ENCODE measurements at regions of chr1 and their contacts with region 1.

Region 1: DNA sequence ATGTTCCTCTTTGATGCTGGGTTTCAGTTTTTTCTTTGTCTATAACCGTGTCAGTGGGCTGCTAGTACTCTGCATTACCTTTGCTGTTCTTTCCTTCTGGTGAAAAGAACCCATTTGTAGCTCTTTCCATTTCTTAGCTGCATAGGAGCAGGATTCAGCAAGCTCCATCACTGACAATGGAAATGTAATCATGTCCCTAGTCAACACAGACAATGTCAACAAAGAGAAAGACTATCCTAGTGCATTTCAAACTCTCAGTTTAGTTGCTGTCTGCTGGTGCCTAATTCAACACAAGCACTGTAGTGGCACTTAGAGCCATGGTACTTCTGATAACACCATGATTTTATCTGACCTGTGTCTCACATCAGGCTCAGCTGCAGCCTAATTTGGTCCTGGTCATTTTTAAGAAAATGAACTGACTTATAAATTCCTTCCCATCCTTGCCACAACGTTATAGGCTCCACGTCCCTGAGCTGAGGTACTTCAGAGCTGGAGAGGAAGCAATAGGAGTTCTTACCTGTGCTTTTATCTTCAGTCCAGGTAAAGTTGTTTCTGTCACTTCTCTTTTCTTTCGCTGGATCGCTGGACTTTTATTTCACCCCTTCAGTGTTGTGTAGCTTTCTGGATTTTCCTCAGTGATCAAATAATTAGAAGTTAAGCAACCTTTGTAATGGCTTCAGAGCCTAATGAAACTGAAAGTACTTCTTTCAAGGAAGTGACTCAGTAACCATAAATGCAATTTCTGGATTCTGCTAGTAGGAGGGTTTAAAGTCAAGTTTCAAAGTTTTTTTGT is at the start of gene GBP3:
- DNase-seq: no peak
- H3K4me3 Mint-ChIP-seq: peak within 1 kb of the TSS; percentile 77
- H3K27ac Mint-ChIP-seq: peak within 1 kb of the TSS; percentile 86
- H3K4me1 Mint-ChIP-seq: peaks cover 47% of the 10 kb centered on the region
- H3K27me3 Mint-ChIP-seq: no peaks in the 10 kb centered on the region
- CTCF ChIP-seq: no peak
- total RNA-seq, gene GBP3: 60.0 and 95.4 TPM in 2 replicates

Region 2: DNA sequence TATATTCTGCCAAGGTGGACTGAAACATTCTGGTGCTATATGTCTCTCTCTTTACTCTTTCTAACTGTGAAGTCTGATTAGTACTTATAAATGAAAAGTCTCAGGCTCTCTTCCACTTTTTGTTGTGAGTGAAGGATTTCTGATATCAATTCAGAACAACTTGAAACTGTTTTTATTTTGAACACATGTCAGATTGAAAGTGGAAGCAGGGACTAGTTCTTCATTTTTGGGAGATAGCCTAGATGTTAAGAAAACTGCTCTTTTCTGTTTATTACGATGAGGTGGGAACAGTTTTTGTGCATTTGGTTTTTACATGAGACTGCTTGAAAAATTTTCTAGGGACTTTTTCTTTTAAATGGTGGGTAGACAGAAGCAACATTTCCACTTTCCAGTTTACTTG is 14.8 kb after region 1 on chr1:
- CTCF ChIA-PET with region 1: interaction called, 13 read pairs
- intact Hi-C with region 1: no loop called
- DNase-seq: no peak
- H3K4me3 Mint-ChIP-seq: no peak overlapping the region
- H3K27ac Mint-ChIP-seq: no peak overlapping the region
- H3K4me1 Mint-ChIP-seq: peaks cover 19% of the 10 kb centered on the region
- H3K27me3 Mint-ChIP-seq: no peaks in the 10 kb centered on the region
- CTCF ChIP-seq: no peak